Activated CD8-positive, alpha-beta T cell treated with anti-CD3 and anti-CD28 coated beads for 36 hours (primary cell): ENCODE measurements at regions of chr10 and their contacts with region 1.

Region 1: GRCh38 chr10:70146489-70147258 is at the start of gene TYSND1:
- DNase-seq: peak; percentile 97
- ATAC-seq: peak; percentile 89
- H3K4me3 Mint-ChIP-seq: peak within 1 kb of the TSS; percentile 89
- H3K27ac Mint-ChIP-seq: peak within 1 kb of the TSS; percentile 95
- H3K4me1 Mint-ChIP-seq: peaks cover 35% of the 10 kb centered on the region
- H3K27me3 Mint-ChIP-seq: no peaks in the 10 kb centered on the region
- CTCF ChIP-seq: peak; percentile 41
- total RNA-seq, gene TYSND1: 20.0 to 20.3 TPM

Region 2: GRCh38 chr10:69925111-69925510 is 221.6 kb before region 1 on chr10:
- CTCF ChIA-PET with region 1: no interaction called
- POLR2A ChIA-PET with region 1: no interaction called
- intact Hi-C with region 1: no loop called
- DNase-seq: no peak
- ATAC-seq: no peak
- H3K4me3 Mint-ChIP-seq: no peak overlapping the region
- H3K27ac Mint-ChIP-seq: no peak overlapping the region
- H3K4me1 Mint-ChIP-seq: no peaks in the 10 kb centered on the region
- H3K27me3 Mint-ChIP-seq: peaks cover 1% of the 10 kb centered on the region
- CTCF ChIP-seq: no peak

Region 3: DNA sequence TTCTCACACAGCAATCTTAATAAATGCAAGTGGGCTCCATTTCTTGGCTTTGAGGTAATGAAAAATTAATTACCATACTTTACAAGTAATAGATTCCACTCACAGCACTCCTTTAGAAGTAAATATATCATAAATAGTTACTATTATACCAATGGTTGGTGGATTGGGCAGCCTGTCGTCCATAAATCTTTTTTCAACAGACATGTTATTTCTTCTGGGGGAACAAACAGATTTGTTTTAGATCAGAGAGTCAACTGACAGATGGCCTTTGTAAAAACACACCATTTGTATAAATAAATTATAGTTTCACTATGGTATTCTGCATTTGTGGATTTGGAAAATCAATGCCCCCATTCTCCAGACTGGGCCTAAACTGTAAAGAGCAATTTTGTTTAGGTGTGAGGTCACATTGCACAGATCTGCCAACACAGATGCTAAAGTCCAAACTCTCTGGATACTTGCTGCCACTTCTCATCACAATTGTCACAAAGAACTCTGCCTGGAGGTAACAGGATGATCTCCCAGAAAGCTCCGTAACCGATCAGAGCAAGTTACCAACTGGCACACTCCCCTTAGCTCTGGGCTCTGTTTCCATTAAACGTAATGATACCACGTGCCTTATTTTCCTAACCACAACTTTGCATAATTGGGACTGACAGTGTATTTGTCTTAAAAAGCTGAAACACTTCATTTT is 98.5 kb before region 1 on chr10:
- CTCF ChIA-PET with region 1: no interaction called
- POLR2A ChIA-PET with region 1: no interaction called
- intact Hi-C with region 1: no loop called
- DNase-seq: no peak
- ATAC-seq: no peak
- H3K4me3 Mint-ChIP-seq: no peak overlapping the region
- H3K27ac Mint-ChIP-seq: no peak overlapping the region
- H3K4me1 Mint-ChIP-seq: peaks cover 7% of the 10 kb centered on the region
- H3K27me3 Mint-ChIP-seq: peaks cover 26% of the 10 kb centered on the region
- CTCF ChIP-seq: no peak

Region 4: DNA sequence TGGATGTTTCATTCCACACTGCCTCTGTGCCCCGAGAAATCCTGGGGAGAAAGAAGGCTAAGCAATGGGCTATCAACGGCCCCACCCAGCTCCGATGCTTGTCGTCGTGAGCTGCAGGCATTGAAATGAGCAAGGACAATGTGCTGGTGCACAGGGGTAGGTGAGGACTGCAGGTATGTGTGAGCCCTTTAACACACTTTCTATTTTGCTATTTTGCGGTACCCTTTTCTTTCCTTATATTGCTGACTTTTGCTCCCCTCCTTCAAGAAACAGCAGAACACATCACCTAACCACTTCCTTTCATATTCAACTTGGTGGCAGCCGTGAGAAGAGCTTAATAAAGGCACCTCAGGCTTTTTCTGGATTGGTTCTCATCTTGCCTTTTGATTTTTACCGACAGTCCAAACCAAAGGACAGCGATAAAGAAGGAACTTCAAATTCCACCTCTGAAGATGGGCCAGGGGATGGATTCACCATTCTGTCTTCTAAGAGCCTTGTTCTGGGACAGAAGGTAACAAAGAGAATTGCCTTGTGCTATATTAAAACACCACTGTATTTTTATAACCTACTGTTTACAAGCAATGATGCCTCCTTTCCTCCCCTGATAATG is 53.2 kb before region 1 on chr10:
- CTCF ChIA-PET with region 1: interaction called, 19 read pairs
- POLR2A ChIA-PET with region 1: interaction called, 18 read pairs
- intact Hi-C with region 1: no loop called
- DNase-seq: peak; percentile 39
- ATAC-seq: peak; percentile 88
- H3K4me3 Mint-ChIP-seq: peak overlapping the region; percentile 85
- H3K27ac Mint-ChIP-seq: peak overlapping the region; percentile 94
- H3K4me1 Mint-ChIP-seq: peaks cover 44% of the 10 kb centered on the region
- H3K27me3 Mint-ChIP-seq: no peaks in the 10 kb centered on the region
- CTCF ChIP-seq: no peak

Region 5: GRCh38 chr10:70162892-70163201 is 16.2 kb after region 1 on chr10:
- CTCF ChIA-PET with region 1: interaction called, 60 read pairs
- POLR2A ChIA-PET with region 1: interaction called, 35 read pairs
- intact Hi-C with region 1: no loop called
- DNase-seq: peak; percentile 87
- ATAC-seq: peak; percentile 90
- H3K4me3 Mint-ChIP-seq: peak overlapping the region; percentile 29
- H3K27ac Mint-ChIP-seq: peak overlapping the region; percentile 85
- H3K4me1 Mint-ChIP-seq: peaks cover 76% of the 10 kb centered on the region
- H3K27me3 Mint-ChIP-seq: no peaks in the 10 kb centered on the region
- CTCF ChIP-seq: no peak

Region 6: GRCh38 chr10:70192315-70192968 is 45.8 kb after region 1 on chr10:
- CTCF ChIA-PET with region 1: interaction called, 44 read pairs
- POLR2A ChIA-PET with region 1: interaction called, 6 read pairs
- intact Hi-C with region 1: no loop called
- DNase-seq: no peak
- ATAC-seq: no peak
- H3K4me3 Mint-ChIP-seq: no peak overlapping the region
- H3K27ac Mint-ChIP-seq: no peak overlapping the region
- H3K4me1 Mint-ChIP-seq: peaks cover 6% of the 10 kb centered on the region
- H3K27me3 Mint-ChIP-seq: no peaks in the 10 kb centered on the region
- CTCF ChIP-seq: no peak

Region 7: GRCh38 chr10:70233109-70233938 is 86.7 kb after region 1 on chr10 and contains the start of gene PPA1:
- CTCF ChIA-PET with region 1: interaction called, 15 read pairs
- POLR2A ChIA-PET with region 1: interaction called, 19 read pairs
- intact Hi-C with region 1: no loop called
- DNase-seq: peak; percentile 99
- ATAC-seq: peak; percentile 94
- H3K4me3 Mint-ChIP-seq: peak within 1 kb of the TSS; percentile 80
- H3K27ac Mint-ChIP-seq: peak within 1 kb of the TSS; percentile 94
- H3K4me1 Mint-ChIP-seq: peaks cover 42% of the 10 kb centered on the region
- H3K27me3 Mint-ChIP-seq: no peaks in the 10 kb centered on the region
- CTCF ChIP-seq: no peak
- total RNA-seq, gene PPA1: 357 to 368 TPM